GM12878 (cell line): ENCODE measurements at regions of chr4 and their contacts with region 1.

Region 1: DNA sequence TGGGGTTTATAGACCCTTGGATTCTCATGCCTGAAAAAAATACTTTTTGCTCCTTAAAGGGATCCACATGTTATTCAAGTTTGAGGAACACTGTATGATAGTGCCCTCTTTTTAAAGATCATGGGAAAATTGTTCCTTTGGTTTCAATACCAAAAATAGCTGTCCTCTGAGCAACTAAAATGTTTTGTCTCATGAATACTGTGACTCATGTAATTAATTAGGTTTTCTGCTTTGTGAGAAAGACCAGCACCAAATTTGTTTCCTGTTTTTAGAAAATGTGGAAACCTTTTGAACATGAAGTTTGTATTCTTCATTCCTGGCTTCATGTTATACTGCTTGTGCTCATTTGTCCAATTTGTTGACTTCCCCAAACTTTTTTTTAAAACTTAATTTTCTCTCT is 127.6 kb upstream of the SH3RF1 start:
- DNase-seq: no peak
- ATAC-seq: peak; percentile 5; the same call in 2 of the 3 replicates
- H3K4me3 ChIP-seq: no peak overlapping the region
- H3K27ac ChIP-seq: no peak overlapping the region
- H3K4me1 ChIP-seq: peaks cover 13% of the 10 kb centered on the region
- H3K27me3 ChIP-seq: no peaks in the 10 kb centered on the region
- CTCF ChIP-seq: no peak
- EP300 ChIP-seq: no peak
- POLR2A ChIP-seq: no peak
- RAD21 ChIP-seq: no peak

Region 2: GRCh38 chr4:169383724-169384123 is 14.6 kb before region 1 on chr4:
- CTCF ChIA-PET with region 1: interaction called, 4 read pairs
- POLR2A ChIA-PET with region 1: interaction called, 5 read pairs
- RAD21 ChIA-PET with region 1: interaction called, 3 read pairs
- SMC1A ChIA-PET with region 1: interaction called, 10 read pairs
- in situ Hi-C with region 1: no loop called
- intact Hi-C with region 1: no loop called
- DNase-seq: no peak
- ATAC-seq: no peak
- H3K4me3 ChIP-seq: no peak overlapping the region
- H3K27ac ChIP-seq: no peak overlapping the region
- H3K4me1 ChIP-seq: no peaks in the 10 kb centered on the region
- H3K27me3 ChIP-seq: no peaks in the 10 kb centered on the region
- CTCF ChIP-seq: no peak
- EP300 ChIP-seq: no peak
- POLR2A ChIP-seq: no peak
- RAD21 ChIP-seq: no peak

Region 3: GRCh38 chr4:169410839-169411770 is 12.8 kb after region 1 on chr4:
- CTCF ChIA-PET with region 1: interaction called, 6 read pairs
- POLR2A ChIA-PET with region 1: interaction called, 7 read pairs
- RAD21 ChIA-PET with region 1: interaction called, 23 read pairs
- SMC1A ChIA-PET with region 1: interaction called, 76 read pairs
- in situ Hi-C with region 1: no loop called
- intact Hi-C with region 1: no loop called
- DNase-seq: peak; percentile 93
- ATAC-seq: peak; percentile 97
- H3K4me3 ChIP-seq: 0 out of 2 replicates have a peak overlapping the region, but pooled peaks have one; percentile 46
- H3K27ac ChIP-seq: peak overlapping the region; percentile 63
- H3K4me1 ChIP-seq: peaks cover 22% of the 10 kb centered on the region
- H3K27me3 ChIP-seq: no peaks in the 10 kb centered on the region
- CTCF ChIP-seq: no peak
- EP300 ChIP-seq: peak; percentile 87 to 92
- POLR2A ChIP-seq: peak; percentile 61
- RAD21 ChIP-seq: peak; percentile 32; the same call in 1 of the 2 replicates